Dendritic cell treated with granulocyte-macrophage colony-stimulating factor and Interleukin-4, amounts not matched to agents 40 ng/mL and 50 ng/mL, for 4 days (primary cell): ENCODE measurements at regions of chr15 and their contacts with region 1.

Region 1: DNA sequence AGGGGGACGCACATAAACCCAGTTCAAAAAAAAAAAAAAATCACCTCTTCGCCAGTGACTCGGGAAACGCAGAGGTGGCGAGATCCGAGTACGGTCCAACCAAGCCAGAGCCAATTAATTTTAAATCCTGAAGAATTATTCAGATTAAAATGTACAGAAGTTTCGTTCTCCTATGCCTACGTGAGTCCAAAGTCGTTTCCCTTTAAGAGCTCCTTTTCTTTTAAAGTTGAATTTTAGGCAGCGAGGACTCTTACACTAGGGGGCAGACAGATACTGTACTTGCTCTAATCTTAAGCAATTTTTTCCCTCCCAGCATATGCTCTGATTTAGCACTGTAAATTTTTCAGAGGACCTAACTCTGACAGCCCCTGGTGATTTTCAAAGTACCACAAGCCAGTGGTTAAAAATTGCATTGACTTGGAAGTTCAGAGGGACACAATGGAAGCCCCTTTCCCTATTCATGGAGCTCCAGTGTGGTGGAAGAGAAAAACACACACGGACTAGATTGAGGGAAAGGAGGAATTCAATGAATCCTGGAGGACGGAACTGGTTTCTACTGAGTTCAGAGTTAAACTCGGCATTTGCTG is 3.3 kb upstream of the NR2F2 start:
- H3K4me3 Mint-ChIP-seq: peak overlapping the region; percentile 61
- H3K27ac Mint-ChIP-seq: no peak overlapping the region
- H3K4me1 Mint-ChIP-seq: peaks cover 23% of the 10 kb centered on the region
- H3K27me3 Mint-ChIP-seq: peaks cover 89% of the 10 kb centered on the region

Region 2: GRCh38 chr15:96374499-96374898 is 47.3 kb after region 1 on chr15:
- intact Hi-C with region 1: no loop called
- H3K4me3 Mint-ChIP-seq: no peak overlapping the region
- H3K27ac Mint-ChIP-seq: no peak overlapping the region
- H3K4me1 Mint-ChIP-seq: no peaks in the 10 kb centered on the region
- H3K27me3 Mint-ChIP-seq: peaks cover 44% of the 10 kb centered on the region

Region 3: GRCh38 chr15:97234851-97235610 is 907.8 kb after region 1 on chr15:
- intact Hi-C with region 1: loop called (anchors 10 kb)
- H3K4me3 Mint-ChIP-seq: no peak overlapping the region
- H3K27ac Mint-ChIP-seq: no peak overlapping the region
- H3K4me1 Mint-ChIP-seq: no peaks in the 10 kb centered on the region
- H3K27me3 Mint-ChIP-seq: no peaks in the 10 kb centered on the region

Region 4: DNA sequence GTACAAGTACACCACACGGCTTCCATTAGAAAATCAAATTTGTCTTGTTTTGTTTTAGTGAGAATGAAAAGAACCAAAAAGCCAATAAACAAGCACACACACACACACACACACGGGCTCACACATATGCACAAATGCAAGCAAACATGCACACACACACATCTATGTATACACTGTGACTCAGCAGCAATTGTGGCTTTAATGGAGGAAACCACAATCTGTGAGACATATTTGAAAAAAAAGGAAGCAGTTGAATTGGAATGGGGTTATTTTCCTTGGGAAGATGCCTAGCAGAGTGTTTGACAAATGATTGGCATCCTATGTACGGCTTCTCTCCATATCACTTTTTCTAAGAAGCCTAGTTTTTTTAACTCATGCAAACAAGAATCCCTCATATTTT is 1432.1 kb after region 1 on chr15:
- intact Hi-C with region 1: loop called (anchors 10 kb)
- H3K4me3 Mint-ChIP-seq: no peak overlapping the region
- H3K27ac Mint-ChIP-seq: no peak overlapping the region
- H3K4me1 Mint-ChIP-seq: peaks cover 6% of the 10 kb centered on the region
- H3K27me3 Mint-ChIP-seq: peaks cover 14% of the 10 kb centered on the region